ENCODE measurements at regions of chr9 and their contacts with region 1.

Region 1: GRCh38 chr9:134641173-134641985 is at the start of gene COL5A1:
- DNase-seq: peak; percentile 91
- total RNA-seq, gene COL5A1: 21.6 TPM

Region 2: GRCh38 chr9:134163353-134164196 is 477.8 kb before region 1 on chr9:
- intact Hi-C with region 1: loop called (anchors 10 kb)
- DNase-seq: peak; percentile 86

Region 3: DNA sequence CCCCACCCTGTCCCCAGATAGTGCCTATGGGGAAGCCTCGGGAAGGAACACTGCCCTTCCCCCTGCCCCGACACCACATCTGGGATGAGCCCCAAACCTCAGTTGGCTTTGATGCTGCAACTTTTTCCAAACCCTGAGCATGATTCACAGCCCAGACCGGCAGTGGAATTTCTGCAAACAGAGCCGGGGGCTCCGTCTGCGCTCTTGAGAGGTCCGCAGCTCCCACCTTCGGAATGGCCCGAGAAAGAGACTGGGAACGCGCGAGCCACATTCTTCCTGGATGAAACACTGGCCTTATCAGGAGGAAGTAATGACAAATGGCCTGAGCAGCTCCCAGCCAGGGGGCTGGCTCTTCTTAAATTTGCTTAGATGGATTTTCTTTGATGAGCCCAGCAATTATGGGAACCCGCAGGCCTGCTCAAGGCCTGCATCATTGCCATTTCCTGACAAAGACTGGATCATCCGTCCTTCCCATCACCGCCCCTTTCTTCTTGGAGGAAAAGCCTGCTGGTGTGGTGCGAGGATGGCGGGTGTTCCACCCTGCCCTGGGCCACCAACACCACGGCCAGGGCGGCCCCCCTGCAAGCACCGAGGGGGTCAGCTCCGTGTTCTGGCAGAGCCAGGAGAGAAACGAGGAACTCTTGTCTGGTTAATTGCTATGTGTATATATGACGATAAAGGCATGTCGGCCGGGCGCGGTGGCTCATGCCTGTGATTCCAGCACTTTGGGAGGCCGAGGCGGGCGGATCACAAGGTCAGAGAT is 38.7 kb before region 1 on chr9:
- intact Hi-C with region 1: loop called (anchors 5 kb)
- DNase-seq: peak; percentile 81

Region 4: GRCh38 chr9:134689321-134690181 is 48.2 kb after region 1 on chr9:
- intact Hi-C with region 1: loop called (anchors 5 kb)
- DNase-seq: peak; percentile 84

Region 5: DNA sequence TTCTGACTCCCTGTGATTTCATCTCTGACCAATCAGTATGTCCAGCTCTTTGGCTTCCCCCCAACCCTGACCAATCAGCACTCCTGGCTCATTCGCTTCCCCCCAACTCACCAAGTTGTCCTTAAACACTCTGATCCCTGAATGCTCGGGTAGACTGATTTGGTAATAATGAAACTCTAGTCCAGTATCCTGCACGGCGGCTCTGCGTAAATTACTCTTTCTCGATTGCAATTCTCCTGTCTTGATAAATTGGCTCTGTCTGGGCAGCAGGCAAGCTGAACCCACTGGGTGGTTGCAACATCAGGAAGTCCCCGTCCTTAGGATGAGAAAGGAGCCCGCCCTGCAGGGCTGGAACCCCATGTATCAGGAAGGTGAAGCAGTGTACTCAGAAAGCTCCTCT is 249.7 kb after region 1 on chr9:
- intact Hi-C with region 1: no loop called
- DNase-seq: no peak